HCT116 (cell line): ENCODE measurements at regions of chr4 and their contacts with region 1.

Region 1: GRCh38 chr4:166875821-166876220 is 358.5 kb downstream of the SPOCK3 start:
- DNase-seq: no peak
- ATAC-seq: no peak
- H3K4me3 ChIP-seq: no peak overlapping the region
- H3K27ac ChIP-seq: no peak overlapping the region
- H3K4me1 ChIP-seq: no peaks in the 10 kb centered on the region
- H3K27me3 ChIP-seq: no peaks in the 10 kb centered on the region
- CTCF ChIP-seq: no peak
- POLR2A ChIP-seq: no peak
- RAD21 ChIP-seq: no peak

Region 2: DNA sequence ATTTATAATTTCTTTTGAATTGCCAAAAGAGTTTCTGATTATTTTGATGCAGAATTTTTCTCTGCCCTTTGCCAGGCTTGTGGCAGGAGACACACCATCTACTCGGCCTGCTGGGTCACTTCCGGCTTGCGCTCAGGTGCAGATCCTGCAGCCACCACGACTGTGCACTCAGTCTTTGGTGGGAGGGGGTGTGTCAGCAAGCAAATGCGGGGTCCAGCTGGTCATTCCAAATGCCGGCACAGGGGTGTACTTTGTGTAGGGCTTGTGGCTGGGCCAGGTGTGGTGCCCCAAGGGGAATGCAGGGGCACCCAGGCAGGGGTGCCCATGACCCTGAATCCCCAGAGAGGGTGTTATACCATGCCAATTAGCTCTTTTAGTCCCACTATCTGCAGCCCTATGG is 329.8 kb before region 1 on chr4:
- CTCF ChIA-PET with region 1: no interaction called
- POLR2A ChIA-PET with region 1: no interaction called
- RAD21 ChIA-PET with region 1: no interaction called
- intact Hi-C with region 1: loop called (anchors 10 kb)
- DNase-seq: no peak
- ATAC-seq: no peak
- H3K4me3 ChIP-seq: no peak overlapping the region
- H3K27ac ChIP-seq: no peak overlapping the region
- H3K4me1 ChIP-seq: no peaks in the 10 kb centered on the region
- H3K27me3 ChIP-seq: no peaks in the 10 kb centered on the region
- CTCF ChIP-seq: no peak
- POLR2A ChIP-seq: no peak
- RAD21 ChIP-seq: no peak

Region 3: GRCh38 chr4:166846939-166847338 is 28.9 kb before region 1 on chr4:
- CTCF ChIA-PET with region 1: no interaction called
- POLR2A ChIA-PET with region 1: no interaction called
- RAD21 ChIA-PET with region 1: no interaction called
- intact Hi-C with region 1: no loop called
- DNase-seq: no peak
- ATAC-seq: no peak
- H3K4me3 ChIP-seq: no peak overlapping the region
- H3K27ac ChIP-seq: no peak overlapping the region
- H3K4me1 ChIP-seq: no peaks in the 10 kb centered on the region
- H3K27me3 ChIP-seq: no peaks in the 10 kb centered on the region
- CTCF ChIP-seq: no peak
- POLR2A ChIP-seq: no peak
- RAD21 ChIP-seq: no peak

Region 4: GRCh38 chr4:166886718-166887117 is 10.9 kb after region 1 on chr4:
- CTCF ChIA-PET with region 1: no interaction called
- POLR2A ChIA-PET with region 1: no interaction called
- RAD21 ChIA-PET with region 1: no interaction called
- intact Hi-C with region 1: no loop called
- DNase-seq: no peak
- ATAC-seq: no peak
- H3K4me3 ChIP-seq: no peak overlapping the region
- H3K27ac ChIP-seq: no peak overlapping the region
- H3K4me1 ChIP-seq: no peaks in the 10 kb centered on the region
- H3K27me3 ChIP-seq: no peaks in the 10 kb centered on the region
- CTCF ChIP-seq: no peak
- POLR2A ChIP-seq: no peak
- RAD21 ChIP-seq: no peak

Region 5: GRCh38 chr4:166957451-166957850 is 81.6 kb after region 1 on chr4:
- CTCF ChIA-PET with region 1: no interaction called
- POLR2A ChIA-PET with region 1: no interaction called
- RAD21 ChIA-PET with region 1: no interaction called
- intact Hi-C with region 1: no loop called
- DNase-seq: no peak
- ATAC-seq: no peak
- H3K4me3 ChIP-seq: no peak overlapping the region
- H3K27ac ChIP-seq: no peak overlapping the region
- H3K4me1 ChIP-seq: no peaks in the 10 kb centered on the region
- H3K27me3 ChIP-seq: no peaks in the 10 kb centered on the region
- CTCF ChIP-seq: no peak
- POLR2A ChIP-seq: no peak
- RAD21 ChIP-seq: no peak

Region 6: DNA sequence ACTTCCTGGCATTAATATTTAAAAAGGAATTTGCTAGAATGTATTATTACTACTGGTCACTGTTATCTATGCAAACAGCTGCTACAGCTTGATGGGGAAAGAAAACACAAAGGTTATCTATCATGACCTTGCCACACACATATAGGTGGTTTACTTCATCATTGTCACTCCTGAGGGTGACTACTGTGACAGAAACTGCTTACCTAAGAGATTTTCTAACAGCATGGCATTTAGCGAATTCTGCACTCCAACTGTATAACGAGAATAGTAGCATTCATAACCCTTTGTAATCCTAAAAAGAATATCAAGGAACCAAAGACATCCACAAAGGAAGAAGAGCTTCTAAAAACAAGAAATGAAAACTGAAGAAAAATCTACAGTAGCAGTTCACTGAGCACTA is 433.1 kb after region 1 on chr4:
- CTCF ChIA-PET with region 1: no interaction called
- POLR2A ChIA-PET with region 1: no interaction called
- RAD21 ChIA-PET with region 1: no interaction called
- intact Hi-C with region 1: no loop called
- DNase-seq: no peak
- ATAC-seq: no peak
- H3K4me3 ChIP-seq: no peak overlapping the region
- H3K27ac ChIP-seq: no peak overlapping the region
- H3K4me1 ChIP-seq: no peaks in the 10 kb centered on the region
- H3K27me3 ChIP-seq: no peaks in the 10 kb centered on the region
- CTCF ChIP-seq: no peak
- POLR2A ChIP-seq: no peak
- RAD21 ChIP-seq: no peak